ENCODE measurements at regions of chr3 and their contacts with region 1.

Region 1: DNA sequence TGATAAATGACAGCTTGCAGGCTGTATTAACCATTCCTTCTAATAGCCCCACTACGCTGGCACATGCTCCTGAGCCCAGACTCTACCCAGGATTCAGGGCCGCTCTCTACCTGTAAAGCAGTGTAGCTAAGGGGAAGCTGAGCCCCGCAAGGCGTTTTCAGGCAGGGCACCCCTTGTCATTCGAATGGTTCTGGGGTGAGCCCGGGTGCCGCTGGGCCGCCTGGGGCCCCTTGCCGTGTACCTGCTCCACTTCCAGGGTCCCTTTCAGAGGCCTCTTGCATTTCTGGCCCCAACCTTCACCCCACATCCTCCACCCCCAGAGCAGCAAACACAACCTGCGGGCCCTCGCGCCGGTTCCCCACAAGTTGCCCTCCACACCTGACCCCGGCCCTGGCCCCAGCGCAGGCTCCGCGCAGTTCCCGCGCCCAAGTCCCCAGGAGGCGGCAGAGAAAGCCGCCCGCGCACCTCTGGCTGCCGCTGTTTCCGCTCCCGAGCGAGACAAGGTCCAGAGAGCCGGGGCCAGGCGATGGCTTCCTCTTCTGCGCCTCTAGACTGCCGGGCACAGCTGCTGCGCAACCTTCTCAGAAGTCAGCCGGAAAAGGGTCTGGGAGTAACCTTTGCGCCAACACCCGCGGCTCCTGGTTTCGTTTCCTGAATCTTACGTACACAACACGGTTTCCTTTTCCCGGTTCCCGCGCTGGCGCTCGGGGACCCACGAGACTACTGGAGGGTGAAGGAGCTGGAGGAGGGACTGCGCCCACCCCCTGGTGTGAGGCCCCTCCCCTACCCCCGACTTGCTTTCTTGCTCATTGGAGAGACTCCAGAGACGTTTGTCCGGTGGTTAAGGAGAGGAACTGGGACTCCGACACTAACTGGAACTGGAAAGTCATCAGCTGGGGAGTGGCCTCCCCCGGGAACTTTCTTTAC is at the start of gene PLSCR1:
- DNase-seq: peak; percentile 87
- ATAC-seq: peak; percentile 88
- H3K4me3 Mint-ChIP-seq: peak within 1 kb of the TSS; percentile 100
- H3K27ac Mint-ChIP-seq: peak within 1 kb of the TSS; percentile 99
- H3K4me1 Mint-ChIP-seq: peaks cover 59% of the 10 kb centered on the region
- H3K27me3 Mint-ChIP-seq: no peaks in the 10 kb centered on the region
- total RNA-seq, gene PLSCR1: 172 to 177 TPM

Region 2: DNA sequence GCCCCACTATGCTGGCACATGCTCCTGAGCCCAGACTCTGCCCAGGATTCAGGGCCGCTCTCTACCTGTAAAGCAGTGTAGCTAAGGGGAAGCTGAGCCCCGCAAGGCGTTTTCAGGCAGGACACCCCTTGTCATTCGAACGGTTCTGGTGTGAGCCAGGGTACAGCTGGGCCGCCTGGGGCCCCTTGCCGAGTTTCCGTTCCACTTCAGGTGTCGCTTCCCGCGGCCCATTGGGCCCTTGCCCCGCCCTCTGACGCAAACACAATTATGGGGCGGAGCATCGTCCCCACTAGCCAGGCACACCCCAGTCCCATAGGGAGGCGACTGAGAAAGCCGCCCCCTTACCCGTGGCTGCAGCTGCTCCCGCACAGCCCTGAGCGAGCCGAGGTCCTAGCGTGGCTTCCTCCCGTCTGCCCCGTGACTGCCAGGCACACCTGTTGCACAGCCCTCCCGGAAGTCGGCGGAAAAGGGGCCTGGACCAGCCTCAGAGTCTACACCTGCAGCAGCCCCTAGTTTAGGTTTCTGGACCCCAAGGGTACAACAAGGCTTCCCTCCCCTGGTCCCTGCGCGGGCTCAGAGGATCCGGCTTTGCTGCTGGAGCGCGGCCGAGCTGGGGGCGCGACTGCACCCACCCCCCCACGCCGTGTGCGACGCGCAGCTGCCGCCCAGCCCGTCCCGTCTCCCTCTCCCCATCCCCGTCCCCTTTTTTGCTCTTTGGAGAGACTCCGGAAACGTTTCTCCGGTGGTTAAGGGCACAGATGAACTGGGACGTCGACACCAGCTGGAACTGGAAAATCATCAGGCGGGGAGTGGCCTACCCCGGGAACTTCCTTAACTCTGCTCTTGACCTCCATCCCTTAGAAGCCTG is 74.9 kb before region 1 on chr3 and contains the start of gene PLSCR2:
- POLR2A ChIA-PET with region 1: interaction called, 26 read pairs
- DNase-seq: peak; percentile 83
- ATAC-seq: peak; percentile 98
- H3K4me3 Mint-ChIP-seq: peak within 1 kb of the TSS; percentile 80
- H3K27ac Mint-ChIP-seq: peak within 1 kb of the TSS; percentile 76
- H3K4me1 Mint-ChIP-seq: peaks cover 4% of the 10 kb centered on the region
- H3K27me3 Mint-ChIP-seq: peaks cover 12% of the 10 kb centered on the region
- total RNA-seq, gene PLSCR2: not detected

Region 3: GRCh38 chr3:146498002-146498736 is 46.1 kb before region 1 on chr3:
- POLR2A ChIA-PET with region 1: interaction called, 31 read pairs
- DNase-seq: peak; percentile 65
- ATAC-seq: peak; percentile 76
- H3K4me3 Mint-ChIP-seq: peak overlapping the region; percentile 72
- H3K27ac Mint-ChIP-seq: peak overlapping the region; percentile 92
- H3K4me1 Mint-ChIP-seq: peaks cover 22% of the 10 kb centered on the region
- H3K27me3 Mint-ChIP-seq: peaks cover 6% of the 10 kb centered on the region

Region 4: GRCh38 chr3:146532406-146532805 is 11.9 kb before region 1 on chr3:
- POLR2A ChIA-PET with region 1: interaction called, 12 read pairs
- DNase-seq: no peak
- ATAC-seq: no peak
- H3K4me3 Mint-ChIP-seq: no peak overlapping the region
- H3K27ac Mint-ChIP-seq: no peak overlapping the region
- H3K4me1 Mint-ChIP-seq: peaks cover 32% of the 10 kb centered on the region
- H3K27me3 Mint-ChIP-seq: no peaks in the 10 kb centered on the region